GM12878 (cell line): ENCODE measurements at regions of chr5 and their contacts with region 1.

Region 1: GRCh38 chr5:76544268-76544926 is 78.8 kb downstream of the F2RL2 start:
- DNase-seq: peak; percentile 25
- ATAC-seq: peak; percentile 55
- H3K4me3 ChIP-seq: no peak overlapping the region
- H3K27ac ChIP-seq: peak overlapping the region; percentile 35; the same call in 1 of the 2 replicates
- H3K4me1 ChIP-seq: peaks cover 37% of the 10 kb centered on the region
- H3K27me3 ChIP-seq: no peaks in the 10 kb centered on the region
- CTCF ChIP-seq: peak; percentile 64 to 81 (median 68); a peak in 5 of 6 replicates
- EP300 ChIP-seq: no peak
- POLR2A ChIP-seq: no peak
- RAD21 ChIP-seq: peak; percentile 77

Region 2: DNA sequence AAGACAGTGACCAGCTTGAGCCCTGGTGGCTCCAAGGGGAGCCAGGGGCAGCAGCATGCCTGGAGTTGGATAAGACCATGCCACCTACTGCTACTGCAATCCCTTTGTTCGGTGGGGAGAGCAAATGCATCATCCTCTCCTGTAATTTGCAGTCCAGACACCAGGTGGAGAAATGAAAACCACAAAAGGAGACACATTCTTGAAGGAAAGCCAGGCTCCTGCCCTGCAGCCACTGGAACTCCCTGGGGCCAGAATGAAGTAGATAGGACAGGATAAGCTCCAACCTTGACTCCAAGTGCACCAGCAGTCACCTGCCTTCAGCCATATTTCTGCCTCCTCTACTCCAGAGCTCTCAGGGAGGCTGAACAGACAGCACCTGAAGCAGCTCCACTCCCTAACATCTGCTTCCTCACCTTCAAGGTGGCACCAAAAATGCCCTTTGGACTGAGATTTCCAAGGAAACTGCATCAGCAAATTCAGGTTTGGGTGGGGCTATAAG is 206.4 kb before region 1 on chr5:
- CTCF ChIA-PET with region 1: interaction called, 3 read pairs
- POLR2A ChIA-PET with region 1: no interaction called
- RAD21 ChIA-PET with region 1: no interaction called
- SMC1A ChIA-PET with region 1: interaction called, 3 read pairs
- in situ Hi-C with region 1: no loop called
- intact Hi-C with region 1: loop called (anchors 1 kb)
- DNase-seq: peak; percentile 24
- ATAC-seq: peak; percentile 86
- H3K4me3 ChIP-seq: no peak overlapping the region
- H3K27ac ChIP-seq: no peak overlapping the region
- H3K4me1 ChIP-seq: no peaks in the 10 kb centered on the region
- H3K27me3 ChIP-seq: no peaks in the 10 kb centered on the region
- CTCF ChIP-seq: peak; percentile 47 to 62 (median 57); a peak in 5 of 6 replicates
- EP300 ChIP-seq: no peak
- POLR2A ChIP-seq: no peak
- RAD21 ChIP-seq: peak; percentile 52

Region 3: DNA sequence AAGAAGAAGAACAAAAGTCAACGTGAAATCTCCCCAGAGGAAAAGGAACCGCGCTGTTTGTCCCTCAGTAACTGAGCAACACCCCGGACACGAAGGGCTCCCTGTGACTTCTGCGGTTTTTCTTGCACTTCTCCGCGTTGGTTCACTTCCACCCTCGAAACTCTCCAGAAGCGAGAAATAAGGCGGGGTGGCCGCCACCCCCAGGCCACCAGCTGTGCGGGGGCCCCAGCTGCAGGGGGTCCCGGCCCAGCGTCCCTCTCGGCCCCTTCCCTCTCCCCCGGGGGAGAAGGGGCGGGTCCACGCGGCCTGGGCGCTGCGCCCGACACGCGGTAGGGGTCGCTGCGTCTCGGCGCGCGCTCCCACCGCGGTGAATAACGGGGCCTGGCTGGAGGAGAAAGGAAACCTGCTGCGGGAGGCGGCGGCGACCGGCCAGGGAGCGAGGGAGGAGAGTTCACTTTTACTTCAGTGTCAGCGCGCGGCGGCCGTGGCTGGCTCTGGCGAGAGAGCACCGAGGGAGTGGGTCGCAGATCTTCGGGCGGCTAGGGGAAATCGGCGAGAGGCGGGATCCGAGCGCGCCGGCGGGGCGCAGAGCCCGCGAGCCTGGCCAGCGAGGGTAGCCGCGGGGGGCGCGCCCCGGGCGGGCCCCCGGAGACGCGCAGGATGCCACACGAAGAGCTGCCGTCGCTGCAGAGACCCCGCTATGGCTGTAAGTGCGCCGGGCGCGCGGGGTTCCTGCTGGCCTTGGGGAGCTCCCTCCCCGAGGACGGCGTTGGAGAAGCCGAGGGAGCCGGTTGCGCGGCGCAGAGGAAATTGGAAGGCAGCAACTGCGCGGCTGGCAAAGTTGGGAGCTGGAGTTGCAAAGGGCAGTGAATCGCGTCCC is 141.3 kb before region 1 on chr5 and contains the start of gene IQGAP2:
- CTCF ChIA-PET with region 1: interaction called, 56 read pairs
- POLR2A ChIA-PET with region 1: interaction called, 9 read pairs
- RAD21 ChIA-PET with region 1: interaction called, 40 read pairs
- SMC1A ChIA-PET with region 1: interaction called, 52 read pairs
- in situ Hi-C with region 1: loop called (anchors 5 kb)
- intact Hi-C with region 1: loop called (anchors 1 kb)
- DNase-seq: no peak
- ATAC-seq: peak; percentile 76
- H3K4me3 ChIP-seq: peak within 1 kb of the TSS; percentile 86
- H3K27ac ChIP-seq: peak within 1 kb of the TSS; percentile 91
- H3K4me1 ChIP-seq: peaks cover 25% of the 10 kb centered on the region
- H3K27me3 ChIP-seq: no peaks in the 10 kb centered on the region
- CTCF ChIP-seq: peak; percentile 78 to 93 (median 80)
- EP300 ChIP-seq: peak in 1 of 2 experiments; percentile 55; a peak in 1 of 4 replicates
- POLR2A ChIP-seq: peak; percentile 78
- RAD21 ChIP-seq: peak; percentile 68
- polyA plus RNA-seq, gene IQGAP2: 17.7 to 17.9 TPM

Region 4: DNA sequence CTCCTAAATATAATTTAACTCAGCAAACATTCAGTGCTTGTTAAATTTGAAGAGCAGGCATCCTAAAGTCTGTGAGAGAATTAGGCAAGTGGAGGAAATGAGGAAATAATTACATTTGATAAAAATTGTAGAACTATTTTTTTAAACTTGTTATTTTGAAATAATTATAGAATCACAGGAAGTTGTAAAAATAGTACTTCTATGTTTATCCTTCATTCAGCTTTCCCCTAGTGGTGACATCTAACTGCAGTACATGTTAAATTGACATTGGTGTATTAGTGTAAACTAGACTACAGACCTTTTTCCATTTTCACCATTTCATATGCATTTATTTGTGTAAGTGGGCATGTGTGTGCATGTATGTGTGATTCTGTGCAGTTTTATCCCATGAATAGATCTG is 27.2 kb after region 1 on chr5:
- CTCF ChIA-PET with region 1: interaction called, 10 read pairs
- POLR2A ChIA-PET with region 1: no interaction called
- RAD21 ChIA-PET with region 1: interaction called, 3 read pairs
- SMC1A ChIA-PET with region 1: interaction called, 9 read pairs
- in situ Hi-C with region 1: no loop called
- intact Hi-C with region 1: no loop called
- DNase-seq: no peak
- ATAC-seq: peak; percentile 36; the same call in 1 of the 3 replicates
- H3K4me3 ChIP-seq: no peak overlapping the region
- H3K27ac ChIP-seq: no peak overlapping the region
- H3K4me1 ChIP-seq: no peaks in the 10 kb centered on the region
- H3K27me3 ChIP-seq: no peaks in the 10 kb centered on the region
- CTCF ChIP-seq: 0 out of 6 replicates have a peak, but pooled peaks of 1 of the 3 experiments have one; percentile 6
- EP300 ChIP-seq: no peak
- POLR2A ChIP-seq: no peak
- RAD21 ChIP-seq: no peak

Region 5: DNA sequence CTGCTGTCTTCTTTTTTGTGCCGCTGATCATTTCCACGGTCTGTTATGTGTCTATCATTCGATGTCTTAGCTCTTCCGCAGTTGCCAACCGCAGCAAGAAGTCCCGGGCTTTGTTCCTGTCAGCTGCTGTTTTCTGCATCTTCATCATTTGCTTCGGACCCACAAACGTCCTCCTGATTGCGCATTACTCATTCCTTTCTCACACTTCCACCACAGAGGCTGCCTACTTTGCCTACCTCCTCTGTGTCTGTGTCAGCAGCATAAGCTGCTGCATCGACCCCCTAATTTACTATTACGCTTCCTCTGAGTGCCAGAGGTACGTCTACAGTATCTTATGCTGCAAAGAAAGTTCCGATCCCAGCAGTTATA is 188.6 kb after region 1 on chr5:
- CTCF ChIA-PET with region 1: interaction called, 3 read pairs
- POLR2A ChIA-PET with region 1: interaction called, 3 read pairs
- RAD21 ChIA-PET with region 1: interaction called, 8 read pairs
- SMC1A ChIA-PET with region 1: interaction called, 18 read pairs
- in situ Hi-C with region 1: no loop called
- intact Hi-C with region 1: no loop called
- DNase-seq: peak; percentile 96
- ATAC-seq: peak; percentile 86
- H3K4me3 ChIP-seq: peak overlapping the region; percentile 50
- H3K27ac ChIP-seq: peak overlapping the region; percentile 61; the same call in 1 of the 2 replicates
- H3K4me1 ChIP-seq: peaks cover 29% of the 10 kb centered on the region
- H3K27me3 ChIP-seq: no peaks in the 10 kb centered on the region
- CTCF ChIP-seq: no peak
- EP300 ChIP-seq: peak; percentile 99 to 100
- POLR2A ChIP-seq: no peak
- RAD21 ChIP-seq: no peak